Dorsolateral prefrontal cortex (tissue), 120 donors: ENCODE measurements at regions of chr6 and their contacts with region 1.

Region 1: DNA sequence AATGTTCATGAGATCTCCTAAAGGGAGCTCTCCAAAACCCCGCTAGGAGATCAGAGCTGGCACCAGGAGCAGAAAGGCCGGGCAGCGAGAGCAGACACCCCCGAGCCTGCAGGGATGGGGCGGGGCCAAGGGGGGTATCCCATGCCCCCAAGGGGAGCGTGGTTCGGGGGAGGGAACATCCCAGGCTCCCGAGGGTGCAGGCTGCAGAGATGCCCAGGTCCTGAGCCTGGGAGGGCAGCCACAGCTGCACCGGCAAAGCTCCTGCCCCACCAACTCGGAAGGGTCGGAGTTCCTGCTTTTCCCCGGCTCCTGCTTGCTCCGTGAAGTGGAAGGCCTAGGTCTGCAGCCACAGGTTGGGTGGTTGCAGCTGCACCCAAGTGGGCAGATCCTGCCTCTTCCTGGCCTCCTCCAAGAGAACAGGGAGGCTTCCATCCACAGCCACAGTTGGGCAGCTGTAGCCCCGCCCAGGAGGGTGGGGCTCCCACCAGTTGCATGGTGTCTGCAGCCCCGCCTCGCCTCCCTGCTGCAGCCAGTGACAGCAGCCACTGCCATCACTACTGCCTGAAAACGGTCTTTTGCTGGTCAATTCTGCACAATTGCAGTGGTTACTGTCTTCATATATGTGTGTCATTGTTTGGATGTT is 13.4 kb upstream of the GMNN start:
- DNase-seq: no peak
- H3K4me3 ChIP-seq: no peak overlapping the region
- H3K27ac ChIP-seq: no peak overlapping the region
- H3K27me3 ChIP-seq: no peaks in the 10 kb centered on the region
- CTCF ChIP-seq: no peak

Region 2: GRCh38 chr6:24489881-24490280 is 271.4 kb before region 1 on chr6:
- intact Hi-C with region 1: no loop called
- DNase-seq: no peak
- H3K4me3 ChIP-seq: no peak overlapping the region
- H3K27ac ChIP-seq: no peak overlapping the region
- H3K27me3 ChIP-seq: no peaks in the 10 kb centered on the region
- CTCF ChIP-seq: no peak

Region 3: DNA sequence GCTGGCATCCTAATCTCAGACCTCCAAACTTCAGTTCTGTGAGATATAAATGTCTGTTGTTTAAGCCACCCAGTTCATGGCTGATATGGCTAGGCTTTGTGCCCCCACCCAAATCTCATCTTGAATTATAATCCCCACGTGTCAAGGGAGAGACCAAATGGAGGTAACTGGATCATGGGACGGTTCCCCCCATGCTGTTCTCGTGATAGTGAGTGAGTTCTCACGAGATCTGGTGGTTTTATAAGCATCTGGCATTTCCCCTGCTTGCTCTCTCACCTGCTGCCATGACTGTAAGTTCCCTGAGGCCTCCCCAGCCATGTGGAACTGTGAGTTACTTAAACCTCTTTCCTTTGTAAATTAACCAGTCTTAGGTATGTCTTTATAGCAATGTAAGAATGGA is 172.0 kb before region 1 on chr6:
- intact Hi-C with region 1: loop called in 1 of 2 experiments (anchors 5 kb)
- DNase-seq: no peak
- H3K4me3 ChIP-seq: no peak overlapping the region
- H3K27ac ChIP-seq: no peak overlapping the region
- H3K27me3 ChIP-seq: no peaks in the 10 kb centered on the region
- CTCF ChIP-seq: no peak

Region 4: DNA sequence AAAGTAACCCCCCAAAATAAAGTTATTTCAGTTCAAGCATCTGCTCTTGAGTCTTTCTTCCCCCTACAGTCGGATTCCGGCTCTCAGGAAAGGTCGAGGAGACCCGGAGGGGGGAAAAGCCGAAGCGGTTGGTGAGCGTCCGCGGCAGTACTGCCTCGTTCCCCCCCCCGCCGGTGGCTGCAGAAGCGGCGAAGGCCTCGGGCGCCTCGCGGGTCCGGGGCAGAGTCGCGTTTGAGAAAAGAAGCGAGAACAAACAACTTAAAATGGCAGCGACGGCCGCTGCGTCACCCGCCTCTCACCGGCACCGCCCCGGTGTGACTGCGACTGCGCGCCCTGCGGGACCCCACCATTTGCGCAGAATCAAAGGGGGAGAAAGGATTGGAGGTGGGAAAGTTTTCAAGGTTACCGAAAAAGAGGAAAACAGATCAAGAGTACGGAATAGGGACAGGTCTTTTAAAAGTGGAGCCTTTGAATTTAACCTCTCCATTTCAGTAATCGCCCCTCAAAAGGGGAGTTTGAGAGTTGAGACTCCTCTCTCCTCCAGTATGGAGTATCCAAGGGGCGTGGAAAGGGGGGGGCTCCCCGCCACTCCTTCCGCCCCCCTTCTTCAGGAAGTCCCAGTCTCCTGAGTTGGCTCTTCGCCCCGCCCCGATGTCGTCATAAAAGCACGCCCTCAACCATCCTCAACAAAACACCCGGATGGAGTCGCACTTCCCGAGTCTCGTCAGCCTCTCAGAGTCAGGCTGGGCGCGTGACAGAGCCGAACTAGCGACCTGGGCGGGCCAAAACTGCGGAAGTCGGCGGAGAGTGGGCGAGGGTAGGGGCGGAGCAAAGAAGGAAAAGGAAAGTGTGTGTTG is 40.5 kb before region 1 on chr6:
- intact Hi-C with region 1: loop called in 1 of 2 experiments (anchors 5 kb)
- DNase-seq: peak; percentile 99 to 100 (median 99)
- H3K4me3 ChIP-seq: peak overlapping the region; percentile 63 to 100 (median 95)
- H3K27ac ChIP-seq: peak overlapping the region; percentile 83 to 100 (median 99)
- H3K27me3 ChIP-seq: no peaks in the 10 kb centered on the region
- CTCF ChIP-seq: peak in 22 of 56 donors; percentile 6 to 35 (median 14)